CD8-positive, alpha-beta memory T cell (primary cell): ENCODE measurements at regions of chr22 and their contacts with region 1.

Region 1: GRCh38 chr22:24156913-24157821 is 24.1 kb upstream of the SUSD2 start:
- DNase-seq: peak; percentile 82 to 93 (median 87)
- H3K4me3 ChIP-seq: peak overlapping the region; percentile 94
- H3K4me3 Mint-ChIP-seq: peak overlapping the region; percentile 92 to 99 (median 97)
- H3K27ac ChIP-seq: peak overlapping the region; percentile 77
- H3K27ac Mint-ChIP-seq: peak overlapping the region; percentile 82 to 100 (median 94)
- H3K4me1 ChIP-seq: peaks cover 72% of the 10 kb centered on the region
- H3K4me1 Mint-ChIP-seq: peaks cover 71 to 90% (median 73%) of the 10 kb centered on the region in 3 donors
- H3K27me3 ChIP-seq: no peaks in the 10 kb centered on the region
- H3K27me3 Mint-ChIP-seq: peaks cover 0 to 3% of the 10 kb centered on the region in 2 donors

Region 2: DNA sequence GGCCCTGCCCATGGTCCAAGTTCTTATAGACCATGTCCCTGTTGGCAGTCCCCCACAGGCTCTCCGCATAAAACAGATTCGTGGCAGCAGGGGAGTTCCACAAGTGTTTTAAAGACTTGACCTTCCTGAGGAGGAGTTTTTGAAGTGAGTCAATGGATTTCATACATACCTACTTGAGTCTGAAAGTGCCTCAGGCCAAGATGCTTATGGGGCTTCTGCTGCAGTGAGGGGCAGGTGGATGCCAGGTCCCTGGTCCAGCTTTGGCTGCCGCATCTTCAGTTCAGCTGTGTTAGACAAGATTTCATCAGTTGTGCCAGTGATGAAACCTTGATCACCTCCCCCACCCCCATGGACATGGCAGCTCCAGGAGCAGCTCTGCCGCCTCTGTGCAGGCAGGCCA is 102.8 kb before region 1 on chr22:
- CTCF ChIA-PET with region 1: no interaction called
- POLR2A ChIA-PET with region 1: no interaction called
- DNase-seq: no peak
- H3K4me3 ChIP-seq: no peak overlapping the region
- H3K4me3 Mint-ChIP-seq: no peak overlapping the region
- H3K27ac ChIP-seq: no peak overlapping the region
- H3K27ac Mint-ChIP-seq: no peak overlapping the region
- H3K4me1 ChIP-seq: no peaks in the 10 kb centered on the region
- H3K4me1 Mint-ChIP-seq: peaks cover 0 to 2% (median 0%) of the 10 kb centered on the region in 3 donors
- H3K27me3 ChIP-seq: no peaks in the 10 kb centered on the region
- H3K27me3 Mint-ChIP-seq: no peaks in the 10 kb centered on the region

Region 3: DNA sequence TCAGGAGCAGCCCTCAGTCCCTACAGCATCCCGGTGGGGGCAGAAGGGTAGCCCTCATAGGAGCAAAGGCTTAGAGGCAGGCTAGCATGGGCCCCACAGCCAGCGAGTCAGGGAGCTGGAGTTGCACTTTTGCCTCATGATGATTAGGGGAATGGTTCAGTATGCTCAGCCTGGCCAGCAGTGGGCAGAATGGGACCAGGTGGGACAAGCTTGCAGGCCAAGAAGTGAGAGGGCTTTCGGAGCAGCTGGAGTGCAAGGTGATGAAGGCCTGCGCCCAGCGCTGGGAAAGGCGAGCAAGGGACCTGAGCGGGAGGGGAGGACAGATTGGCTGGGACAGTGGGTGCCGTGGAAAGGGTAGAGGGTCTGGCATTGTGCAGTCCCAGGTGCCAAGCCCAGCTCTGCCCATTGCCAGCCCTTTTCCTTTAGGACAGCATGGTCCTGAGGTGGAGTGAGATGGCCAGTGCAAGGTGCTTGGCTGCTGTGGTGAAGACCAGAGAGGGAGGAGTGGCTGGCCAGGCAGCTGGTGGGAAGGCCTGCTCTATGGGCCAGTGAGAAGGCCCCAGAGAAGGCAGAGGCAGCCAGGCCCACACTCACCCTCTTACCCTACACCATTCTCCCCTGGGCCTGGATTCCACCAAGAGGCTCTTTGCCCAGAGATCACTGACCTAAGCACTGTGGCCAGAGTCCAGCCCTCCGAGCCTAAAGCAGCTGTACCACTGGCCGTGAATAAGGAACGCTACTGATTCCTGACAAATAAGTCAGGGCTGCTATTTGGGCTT is 23.8 kb before region 1 on chr22:
- CTCF ChIA-PET with region 1: interaction called, 222 read pairs
- POLR2A ChIA-PET with region 1: interaction called, 10 read pairs
- DNase-seq: peak; percentile 7 to 74 (median 39)
- H3K4me3 ChIP-seq: no peak overlapping the region
- H3K4me3 Mint-ChIP-seq: peak overlapping the region in 3 of 7 donors; percentile 16 to 25 (median 20)
- H3K27ac ChIP-seq: no peak overlapping the region
- H3K27ac Mint-ChIP-seq: peak overlapping the region; percentile 49 to 94 (median 84)
- H3K4me1 ChIP-seq: peaks cover 21% of the 10 kb centered on the region
- H3K4me1 Mint-ChIP-seq: peaks cover 14 to 31% (median 19%) of the 10 kb centered on the region in 3 donors
- H3K27me3 ChIP-seq: no peaks in the 10 kb centered on the region
- H3K27me3 Mint-ChIP-seq: no peaks in the 10 kb centered on the region

Region 4: DNA sequence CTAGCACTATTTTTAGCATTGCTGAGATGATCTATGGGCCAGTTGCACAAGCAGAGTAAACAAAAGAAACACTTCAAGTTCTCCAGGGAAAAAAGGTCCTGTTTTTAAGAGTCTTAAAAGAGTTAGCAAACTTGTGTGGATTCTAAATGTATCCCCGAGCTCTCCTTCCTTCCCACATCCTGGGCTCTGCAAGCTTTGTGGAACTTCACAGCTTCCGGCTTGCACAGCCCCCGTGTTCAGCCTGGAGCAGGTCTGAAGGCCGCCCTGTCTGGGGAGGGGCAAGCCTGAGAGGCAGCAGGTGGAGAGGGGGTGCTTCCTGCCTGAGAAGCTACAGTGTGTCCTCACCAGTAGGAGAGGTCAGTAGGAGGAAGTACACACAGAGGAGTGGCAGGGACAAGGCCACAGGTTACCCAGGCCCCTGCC is 11.0 kb before region 1 on chr22:
- CTCF ChIA-PET with region 1: interaction called, 222 read pairs
- POLR2A ChIA-PET with region 1: interaction called, 25 read pairs
- DNase-seq: peak in 3 of 5 donors; percentile 23 to 66 (median 44)
- H3K4me3 ChIP-seq: peak overlapping the region; percentile 57
- H3K4me3 Mint-ChIP-seq: peak overlapping the region in 6 of 7 donors; percentile 15 to 68 (median 45)
- H3K27ac ChIP-seq: peak overlapping the region; percentile 33
- H3K27ac Mint-ChIP-seq: peak overlapping the region; percentile 53 to 94 (median 84)
- H3K4me1 ChIP-seq: peaks cover 69% of the 10 kb centered on the region
- H3K4me1 Mint-ChIP-seq: peaks cover 60 to 87% (median 63%) of the 10 kb centered on the region in 3 donors
- H3K27me3 ChIP-seq: no peaks in the 10 kb centered on the region
- H3K27me3 Mint-ChIP-seq: no peaks in the 10 kb centered on the region

Region 5: DNA sequence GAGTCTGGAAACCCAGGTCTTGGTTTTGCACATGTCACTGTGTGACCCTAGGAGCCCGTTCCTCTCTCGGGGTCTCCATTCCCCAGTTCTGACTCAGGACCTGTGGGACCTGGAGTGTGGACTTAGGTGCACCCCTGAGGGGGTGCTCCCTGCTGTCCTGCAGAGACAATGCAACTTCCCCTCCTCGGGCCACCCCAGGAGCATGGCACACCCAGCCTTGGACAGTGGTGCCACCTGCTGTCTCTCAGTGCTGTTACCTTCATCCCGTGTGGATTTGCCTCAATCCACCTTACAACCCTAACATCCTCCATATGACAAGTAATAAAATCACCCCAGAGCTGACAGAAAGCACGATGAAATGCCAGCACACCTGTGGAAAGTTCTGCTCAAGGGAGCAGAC is 1015.0 kb after region 1 on chr22:
- CTCF ChIA-PET with region 1: no interaction called
- POLR2A ChIA-PET with region 1: no interaction called
- DNase-seq: peak in 2 of 5 donors; percentile 13 to 55
- H3K4me3 ChIP-seq: no peak overlapping the region
- H3K4me3 Mint-ChIP-seq: no peak overlapping the region
- H3K27ac ChIP-seq: no peak overlapping the region
- H3K27ac Mint-ChIP-seq: peak overlapping the region in 1 of 8 donors; percentile 30
- H3K4me1 ChIP-seq: no peaks in the 10 kb centered on the region
- H3K4me1 Mint-ChIP-seq: no peaks in the 10 kb centered on the region
- H3K27me3 ChIP-seq: no peaks in the 10 kb centered on the region
- H3K27me3 Mint-ChIP-seq: peaks cover 0 to 3% of the 10 kb centered on the region in 2 donors